ENCODE measurements at regions of chr9 and their contacts with region 1.

Region 1: DNA sequence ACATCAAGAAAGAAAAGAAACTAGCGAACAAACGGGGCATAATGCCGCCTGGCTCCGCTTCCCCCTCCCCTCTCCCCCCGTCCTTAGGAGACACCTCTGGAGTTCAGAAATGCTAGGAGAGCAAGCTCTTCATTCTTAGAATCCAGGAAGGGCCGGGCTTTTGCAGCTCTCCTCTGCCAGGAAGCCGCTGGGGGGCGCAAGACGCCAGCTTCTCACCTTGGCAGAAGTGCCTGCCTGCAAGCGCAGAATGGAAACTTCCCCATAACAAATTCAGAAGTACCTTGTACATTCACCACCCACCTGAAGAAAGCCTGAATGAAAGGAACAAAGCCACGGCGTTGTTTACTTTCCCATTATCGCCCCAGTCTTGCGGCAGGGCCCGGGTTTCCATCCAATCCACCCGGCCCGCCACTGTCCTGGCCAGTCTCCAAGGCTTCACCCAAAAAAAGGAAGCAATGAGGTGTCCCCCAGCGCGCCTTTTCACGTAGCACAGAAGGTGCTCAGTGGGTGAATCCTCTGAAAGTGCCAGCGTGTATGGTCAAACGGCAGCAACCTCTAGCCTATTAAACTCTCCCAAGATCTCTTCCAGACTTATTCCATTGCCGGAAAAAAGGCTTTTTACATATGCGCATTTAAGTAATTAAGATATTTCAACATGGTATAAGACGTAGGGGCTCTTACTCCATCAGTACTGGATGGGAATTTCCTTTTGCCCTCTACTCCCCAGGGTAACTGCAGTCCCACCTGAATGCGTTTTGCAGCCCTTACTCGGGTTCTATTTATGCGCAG is 1.6 kb upstream of the GADD45G start:
- DNase-seq: peak; percentile 77
- H3K4me3 ChIP-seq: no peak overlapping the region
- H3K27ac ChIP-seq: no peak overlapping the region
- H3K4me1 ChIP-seq: peaks cover 34% of the 10 kb centered on the region
- H3K27me3 ChIP-seq: peaks cover 7 to 14% of the 10 kb centered on the region in 2 experiments
- CTCF ChIP-seq: peak; percentile 85 to 93
- POLR2A ChIP-seq: no peak

Region 2: GRCh38 chr9:89254772-89255123 is 348.4 kb before region 1 on chr9:
- CTCF ChIA-PET with region 1: no interaction called
- POLR2A ChIA-PET with region 1: no interaction called
- dilution Hi-C with region 1: no loop called
- intact Hi-C with region 1: no loop called
- DNase-seq: no peak
- H3K4me3 ChIP-seq: no peak overlapping the region
- H3K27ac ChIP-seq: no peak overlapping the region
- H3K4me1 ChIP-seq: no peaks in the 10 kb centered on the region
- H3K27me3 ChIP-seq: no peaks in the 10 kb centered on the region
- CTCF ChIP-seq: no peak
- POLR2A ChIP-seq: no peak

Region 3: DNA sequence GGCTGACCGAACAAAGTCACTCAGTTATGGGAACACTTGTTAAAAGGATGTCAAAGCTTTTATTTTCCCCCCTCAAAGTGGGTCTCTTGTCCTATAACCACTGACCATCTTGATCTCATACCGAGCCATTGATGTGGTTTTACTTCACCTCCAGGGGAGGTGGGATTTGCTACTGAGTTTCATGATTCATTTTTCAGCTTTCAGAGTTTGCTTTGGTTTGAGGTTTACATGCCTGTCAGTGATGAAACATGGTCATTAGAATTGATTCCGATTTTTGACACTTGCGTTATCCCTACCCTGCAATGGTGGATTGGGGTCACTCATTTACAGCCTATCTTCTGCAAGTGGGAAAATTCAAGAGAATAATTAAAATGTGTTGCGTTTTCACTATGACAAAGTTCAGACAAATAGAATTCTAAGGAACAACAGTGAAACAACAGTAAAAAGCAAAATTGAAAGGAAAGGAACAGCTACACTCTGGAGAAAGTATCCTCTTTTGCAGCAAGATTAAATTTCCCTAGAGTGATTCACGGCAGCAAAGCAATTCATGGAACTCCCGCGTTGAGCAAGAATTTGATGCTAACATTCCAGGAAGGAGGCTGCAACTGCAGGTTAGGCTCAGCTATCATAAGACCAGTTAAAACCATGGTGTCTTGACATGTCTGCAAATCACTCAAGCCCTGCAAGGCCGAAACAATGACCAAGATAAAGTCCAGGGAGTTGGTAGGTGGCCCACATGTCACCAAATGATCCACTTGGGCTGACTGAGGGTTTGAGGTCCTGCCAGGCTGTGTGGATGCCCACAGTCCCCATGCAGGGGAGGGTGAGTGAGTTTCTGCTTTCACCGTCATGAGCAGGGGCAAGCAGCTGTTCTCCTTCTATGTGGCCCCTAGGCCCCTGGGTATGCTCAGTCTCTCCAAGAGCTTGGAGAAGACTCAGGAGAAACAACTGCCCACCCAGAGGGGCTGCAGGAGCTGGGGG is 11.0 kb after region 1 on chr9:
- CTCF ChIA-PET with region 1: interaction called, 18 read pairs
- POLR2A ChIA-PET with region 1: no interaction called
- dilution Hi-C with region 1: no loop called
- intact Hi-C with region 1: no loop called
- DNase-seq: no peak
- H3K4me3 ChIP-seq: no peak overlapping the region
- H3K27ac ChIP-seq: no peak overlapping the region
- H3K4me1 ChIP-seq: no peaks in the 10 kb centered on the region
- H3K27me3 ChIP-seq: no peaks in the 10 kb centered on the region
- CTCF ChIP-seq: no peak
- POLR2A ChIP-seq: no peak

Region 4: GRCh38 chr9:89732295-89732938 is 129.2 kb after region 1 on chr9:
- CTCF ChIA-PET with region 1: interaction called, 5 read pairs
- POLR2A ChIA-PET with region 1: no interaction called
- dilution Hi-C with region 1: no loop called
- intact Hi-C with region 1: loop called (anchors 2 kb)
- DNase-seq: peak; percentile 10
- H3K4me3 ChIP-seq: no peak overlapping the region
- H3K27ac ChIP-seq: no peak overlapping the region
- H3K4me1 ChIP-seq: peaks cover 11% of the 10 kb centered on the region
- H3K27me3 ChIP-seq: no peaks in the 10 kb centered on the region
- CTCF ChIP-seq: no peak
- POLR2A ChIP-seq: no peak

Region 5: GRCh38 chr9:89956907-89957306 is 353.7 kb after region 1 on chr9:
- CTCF ChIA-PET with region 1: interaction called, 10 read pairs
- POLR2A ChIA-PET with region 1: no interaction called
- dilution Hi-C with region 1: no loop called
- intact Hi-C with region 1: no loop called
- DNase-seq: no peak
- H3K4me3 ChIP-seq: no peak overlapping the region
- H3K27ac ChIP-seq: no peak overlapping the region
- H3K4me1 ChIP-seq: no peaks in the 10 kb centered on the region
- H3K27me3 ChIP-seq: no peaks in the 10 kb centered on the region
- CTCF ChIP-seq: no peak
- POLR2A ChIP-seq: no peak

Region 6: GRCh38 chr9:90095682-90096081 is 492.5 kb after region 1 on chr9:
- CTCF ChIA-PET with region 1: interaction called, 373 read pairs
- POLR2A ChIA-PET with region 1: no interaction called
- dilution Hi-C with region 1: no loop called
- intact Hi-C with region 1: no loop called
- DNase-seq: no peak
- H3K4me3 ChIP-seq: no peak overlapping the region
- H3K27ac ChIP-seq: no peak overlapping the region
- H3K4me1 ChIP-seq: no peaks in the 10 kb centered on the region
- H3K27me3 ChIP-seq: no peaks in the 10 kb centered on the region
- CTCF ChIP-seq: no peak
- POLR2A ChIP-seq: no peak

Measured in endothelial cell of umbilical vein (primary cell).